Activated naive CD4-positive, alpha-beta T cell treated with anti-CD3 and anti-CD28 coated beads for 36 hours (primary cell): ENCODE measurements at regions of chr15 and their contacts with region 1.

Region 1: DNA sequence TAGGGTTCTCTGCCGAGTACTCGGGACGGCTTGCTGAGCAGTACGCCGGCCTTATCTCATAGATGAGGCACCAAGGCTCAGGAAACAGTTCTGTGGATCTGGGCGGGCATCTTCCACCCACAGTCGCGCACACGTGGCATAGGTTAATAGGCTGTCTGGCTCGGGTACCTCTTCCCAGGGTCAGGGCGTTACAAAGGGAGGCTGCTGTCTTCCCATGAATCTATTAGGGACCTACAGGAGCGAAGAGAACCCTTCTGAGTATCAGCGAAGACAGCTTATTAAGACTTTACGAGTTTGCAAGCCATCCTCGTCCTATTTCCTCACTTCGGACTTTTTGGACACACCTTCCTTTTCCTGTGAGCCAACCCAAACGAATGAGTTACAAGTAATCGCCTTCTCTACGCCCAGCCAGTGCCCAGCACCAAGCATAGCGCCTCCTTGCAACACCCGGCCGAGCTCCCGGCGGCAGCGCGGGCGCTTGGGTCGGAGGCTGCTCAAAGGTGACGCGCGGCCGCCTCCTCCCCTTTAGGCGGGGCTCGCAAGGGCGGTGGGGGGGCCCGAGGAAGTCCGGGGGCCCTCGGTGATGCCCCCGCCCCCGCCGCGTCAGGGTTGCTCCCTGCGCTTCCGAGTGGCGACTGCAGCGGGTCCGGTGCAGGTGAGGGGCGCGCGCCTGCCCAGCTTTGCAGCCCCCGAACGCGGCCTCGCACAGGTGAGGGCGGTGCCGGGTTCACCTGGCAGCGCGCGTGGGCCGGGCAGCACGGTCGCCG is at the start of gene MCTP2:
- DNase-seq: peak; percentile 87
- H3K4me3 Mint-ChIP-seq: peak within 1 kb of the TSS; percentile 87
- H3K27ac Mint-ChIP-seq: peak within 1 kb of the TSS; percentile 84
- H3K4me1 Mint-ChIP-seq: peaks cover 48% of the 10 kb centered on the region
- H3K27me3 Mint-ChIP-seq: no peaks in the 10 kb centered on the region
- total RNA-seq, gene MCTP2: 33.7 to 35.1 TPM

Region 2: GRCh38 chr15:92903941-92904831 is 1327.0 kb before region 1 on chr15:
- CTCF ChIA-PET with region 1: no interaction called
- intact Hi-C with region 1: loop called (anchors 10 kb)
- DNase-seq: peak; percentile 99
- H3K4me3 Mint-ChIP-seq: peak overlapping the region; percentile 92
- H3K27ac Mint-ChIP-seq: peak overlapping the region; percentile 100
- H3K4me1 Mint-ChIP-seq: peaks cover 50% of the 10 kb centered on the region
- H3K27me3 Mint-ChIP-seq: peaks cover 4% of the 10 kb centered on the region

Region 3: GRCh38 chr15:94174399-94174802 is 56.7 kb before region 1 on chr15:
- CTCF ChIA-PET with region 1: no interaction called
- intact Hi-C with region 1: loop called (anchors 1 kb)
- DNase-seq: peak; percentile 26
- H3K4me3 Mint-ChIP-seq: no peak overlapping the region
- H3K27ac Mint-ChIP-seq: peak overlapping the region; percentile 10
- H3K4me1 Mint-ChIP-seq: peaks cover 19% of the 10 kb centered on the region
- H3K27me3 Mint-ChIP-seq: peaks cover 6% of the 10 kb centered on the region

Region 4: GRCh38 chr15:94247789-94248638 is 16.9 kb after region 1 on chr15:
- CTCF ChIA-PET with region 1: no interaction called
- intact Hi-C with region 1: no loop called
- DNase-seq: no peak
- H3K4me3 Mint-ChIP-seq: no peak overlapping the region
- H3K27ac Mint-ChIP-seq: no peak overlapping the region
- H3K4me1 Mint-ChIP-seq: peaks cover 7% of the 10 kb centered on the region
- H3K27me3 Mint-ChIP-seq: no peaks in the 10 kb centered on the region

Region 5: DNA sequence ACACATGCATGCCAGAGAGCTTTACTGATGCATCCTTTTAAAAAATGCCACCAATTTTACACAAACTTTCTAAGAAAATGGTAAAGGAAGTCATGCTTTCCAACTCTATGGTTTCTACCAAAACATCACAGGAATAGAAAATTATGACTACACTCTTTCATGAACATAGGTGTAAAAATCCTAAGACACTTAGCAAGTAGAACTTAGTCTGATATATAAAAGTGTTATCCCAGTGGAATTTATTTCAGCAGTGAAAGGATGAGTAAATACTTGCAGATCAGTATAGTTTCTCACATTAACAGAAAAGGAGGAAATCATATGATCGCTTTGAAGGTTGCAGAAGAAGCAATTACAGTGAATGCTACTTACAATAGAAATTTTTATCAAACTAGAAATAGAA is 43.6 kb after region 1 on chr15:
- CTCF ChIA-PET with region 1: no interaction called
- intact Hi-C with region 1: loop called (anchors 2 kb)
- DNase-seq: no peak
- H3K4me3 Mint-ChIP-seq: no peak overlapping the region
- H3K27ac Mint-ChIP-seq: no peak overlapping the region
- H3K4me1 Mint-ChIP-seq: peaks cover 29% of the 10 kb centered on the region
- H3K27me3 Mint-ChIP-seq: no peaks in the 10 kb centered on the region

Region 6: DNA sequence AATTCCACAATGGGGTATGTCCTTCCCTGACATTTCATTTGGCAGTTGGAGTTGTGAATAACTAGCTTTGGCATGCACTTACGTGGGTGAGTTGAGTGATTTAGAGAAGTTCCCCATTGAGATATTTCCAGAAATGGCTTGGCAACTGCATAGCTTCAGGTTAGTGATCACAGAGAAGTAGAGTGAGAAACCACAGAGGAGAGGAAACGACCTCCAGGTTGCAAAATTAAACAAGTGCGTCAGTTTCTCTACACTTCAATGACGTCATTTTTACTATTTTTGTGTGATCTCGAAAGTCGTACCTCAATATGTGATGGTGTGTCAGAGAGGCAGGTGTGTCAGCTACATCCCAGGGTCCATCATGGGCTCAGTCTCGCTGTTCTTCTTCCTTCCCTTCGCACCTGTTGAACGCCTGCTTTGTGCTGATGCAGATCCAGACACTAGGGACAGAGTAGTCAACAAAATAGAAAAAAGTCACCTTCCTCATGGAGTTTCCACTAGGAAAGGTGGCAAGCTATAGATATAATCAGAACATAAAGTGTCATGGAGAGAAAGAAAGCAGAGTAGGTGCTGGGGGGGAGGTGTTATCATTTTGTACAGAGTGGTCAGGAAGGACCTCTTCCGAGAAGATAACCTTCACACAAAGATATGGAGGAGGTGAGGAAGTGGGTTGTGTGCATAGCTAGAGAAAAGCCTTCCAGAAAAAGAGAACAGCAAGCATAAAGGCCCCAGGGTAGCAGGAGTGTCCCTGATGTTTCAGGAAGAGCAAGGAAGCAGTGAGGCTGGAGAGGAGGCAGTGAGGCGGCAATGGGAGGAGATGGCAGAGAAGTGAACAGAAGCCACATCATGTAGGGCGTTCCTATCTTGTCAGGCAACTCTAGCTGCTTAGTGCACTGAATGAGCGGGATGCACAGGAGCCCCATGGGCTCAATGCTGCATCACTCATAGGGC is 75.8 kb after region 1 on chr15:
- CTCF ChIA-PET with region 1: interaction called, 6 read pairs
- intact Hi-C with region 1: loop called (anchors 1 kb)
- DNase-seq: peak; percentile 49
- H3K4me3 Mint-ChIP-seq: no peak overlapping the region
- H3K27ac Mint-ChIP-seq: peak overlapping the region; percentile 87
- H3K4me1 Mint-ChIP-seq: peaks cover 44% of the 10 kb centered on the region
- H3K27me3 Mint-ChIP-seq: no peaks in the 10 kb centered on the region

Region 7: DNA sequence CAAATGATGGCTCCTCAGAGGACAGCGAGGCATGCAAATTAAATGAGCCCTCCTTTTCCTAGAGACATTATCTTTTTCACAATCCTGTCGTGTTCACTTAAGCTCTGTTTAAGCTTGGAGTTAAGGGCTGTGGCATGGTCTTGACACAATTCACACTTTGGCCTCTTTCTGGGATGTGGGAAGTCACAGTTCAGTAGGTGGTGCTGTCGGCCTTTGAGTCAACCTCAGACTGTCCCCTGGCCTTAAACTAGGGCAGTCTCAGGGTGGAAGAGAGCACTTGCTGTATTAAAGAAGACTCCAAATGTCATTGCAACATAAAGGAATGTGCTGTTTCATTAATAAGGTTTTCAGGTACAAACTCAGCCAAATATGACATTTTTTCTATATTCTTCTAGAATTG is 351.2 kb after region 1 on chr15:
- CTCF ChIA-PET with region 1: no interaction called
- intact Hi-C with region 1: loop called (anchors 5 kb)
- DNase-seq: peak; percentile 66
- H3K4me3 Mint-ChIP-seq: no peak overlapping the region
- H3K27ac Mint-ChIP-seq: no peak overlapping the region
- H3K4me1 Mint-ChIP-seq: peaks cover 31% of the 10 kb centered on the region
- H3K27me3 Mint-ChIP-seq: peaks cover 71% of the 10 kb centered on the region